CD8-positive, alpha-beta memory T cell (primary cell): ENCODE measurements at regions of chr17 and their contacts with region 1.

Region 1: GRCh38 chr17:46977348-46977747 is 1.7 kb downstream of the RPRML start:
- DNase-seq: no peak
- H3K4me3 ChIP-seq: no peak overlapping the region
- H3K4me3 Mint-ChIP-seq: peak overlapping the region in 4 of 7 donors; percentile 13 to 80 (median 46)
- H3K27ac ChIP-seq: no peak overlapping the region
- H3K27ac Mint-ChIP-seq: peak overlapping the region in 1 of 8 donors; percentile 47
- H3K4me1 ChIP-seq: no peaks in the 10 kb centered on the region
- H3K4me1 Mint-ChIP-seq: peaks cover 10 to 21% (median 16%) of the 10 kb centered on the region in 3 donors
- H3K27me3 ChIP-seq: peaks cover 9% of the 10 kb centered on the region
- H3K27me3 Mint-ChIP-seq: peaks cover 29 to 48% of the 10 kb centered on the region in 2 donors

Region 2: DNA sequence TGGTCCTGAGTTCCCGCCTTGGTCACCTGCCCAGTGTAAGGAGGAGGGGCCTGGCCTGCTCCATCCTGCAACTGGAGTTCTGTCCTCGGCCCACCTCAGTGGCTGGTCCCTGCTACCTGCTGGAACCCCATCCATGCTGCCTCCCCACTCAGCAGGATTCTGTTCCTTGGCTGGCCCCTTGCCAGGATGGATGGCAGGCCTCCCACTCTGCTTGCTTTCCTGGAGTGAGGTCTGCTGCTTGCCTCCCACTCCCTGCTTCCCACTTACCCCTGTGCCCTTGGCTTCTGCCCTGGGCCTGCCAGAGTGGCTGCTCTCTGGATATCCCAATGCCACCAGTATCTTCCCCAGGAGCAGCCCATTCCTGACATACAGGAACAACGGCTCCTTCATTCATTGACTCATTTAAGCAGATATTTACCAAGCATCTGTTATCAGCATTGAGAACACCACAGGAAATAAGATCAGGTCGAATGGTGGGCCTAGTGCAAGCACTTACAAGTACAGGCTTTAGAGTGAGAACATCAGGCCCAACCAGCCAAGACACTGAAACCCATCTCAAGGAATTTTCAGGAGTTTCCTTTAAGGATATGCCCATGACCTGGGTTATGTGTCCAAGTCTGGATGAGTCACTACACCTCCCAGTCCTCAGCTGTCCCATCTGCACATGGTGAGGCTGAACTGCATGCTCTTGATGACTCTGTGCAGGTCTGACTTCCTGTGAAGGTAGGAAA is 18.7 kb after region 1 on chr17:
- CTCF ChIA-PET with region 1: no interaction called
- POLR2A ChIA-PET with region 1: interaction called, 11 read pairs
- DNase-seq: no peak
- H3K4me3 ChIP-seq: no peak overlapping the region
- H3K4me3 Mint-ChIP-seq: no peak overlapping the region
- H3K27ac ChIP-seq: no peak overlapping the region
- H3K27ac Mint-ChIP-seq: peak overlapping the region in 1 of 8 donors; percentile 55
- H3K4me1 ChIP-seq: no peaks in the 10 kb centered on the region
- H3K4me1 Mint-ChIP-seq: peaks cover under 1 to 1% (median under 1%) of the 10 kb centered on the region in 3 donors
- H3K27me3 ChIP-seq: no peaks in the 10 kb centered on the region
- H3K27me3 Mint-ChIP-seq: no peaks in the 10 kb centered on the region

Region 3: DNA sequence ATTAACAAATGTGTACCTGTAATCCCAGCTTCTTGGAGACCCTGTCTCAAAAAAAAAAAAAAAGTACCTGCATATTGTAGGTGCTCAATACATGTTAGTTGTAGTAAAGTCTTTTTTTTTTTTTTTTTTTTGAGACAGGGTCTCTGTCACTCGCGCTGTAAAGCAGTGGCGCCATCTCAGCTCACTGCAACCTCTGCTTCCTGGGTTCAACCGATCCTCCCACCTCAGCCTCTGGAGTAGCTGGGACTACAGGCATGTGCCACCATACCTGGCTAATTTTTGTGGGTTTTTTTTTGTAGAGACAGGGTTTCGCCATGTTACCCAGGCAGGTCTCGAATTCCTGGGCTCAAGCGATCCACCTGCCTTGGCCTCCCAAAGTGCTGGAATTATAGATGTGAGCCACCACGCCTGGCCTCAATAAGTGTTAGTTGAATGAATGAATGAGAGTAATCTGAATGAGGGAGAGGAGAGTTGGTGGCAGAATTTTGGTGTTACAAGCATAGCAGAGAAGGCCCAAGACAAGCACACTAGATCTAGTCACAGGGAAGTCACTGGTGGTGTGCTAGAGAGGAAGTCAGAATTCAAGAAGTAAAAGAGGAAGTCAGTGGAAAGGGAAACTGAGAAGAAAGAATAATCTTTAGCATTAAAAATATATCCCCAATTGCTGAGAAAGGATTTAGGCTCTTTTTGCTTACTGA is 222.4 kb after region 1 on chr17:
- CTCF ChIA-PET with region 1: no interaction called
- POLR2A ChIA-PET with region 1: no interaction called
- DNase-seq: no peak
- H3K4me3 ChIP-seq: no peak overlapping the region
- H3K4me3 Mint-ChIP-seq: no peak overlapping the region
- H3K27ac ChIP-seq: no peak overlapping the region
- H3K27ac Mint-ChIP-seq: peak overlapping the region in 2 of 8 donors; percentile 25 to 52
- H3K4me1 ChIP-seq: peaks cover 22% of the 10 kb centered on the region
- H3K4me1 Mint-ChIP-seq: peaks cover 27 to 31% (median 28%) of the 10 kb centered on the region in 3 donors
- H3K27me3 ChIP-seq: no peaks in the 10 kb centered on the region
- H3K27me3 Mint-ChIP-seq: peaks cover 0 to 1% of the 10 kb centered on the region in 2 donors